ENCODE measurements at regions of chr12 and their contacts with region 1.

Region 1: GRCh38 chr12:50111693-50112455 is at the start of gene COX14:
- DNase-seq: peak; percentile 99
- ATAC-seq: peak; percentile 93
- H3K4me3 ChIP-seq: peak within 1 kb of the TSS; percentile 73
- H3K27ac ChIP-seq: peak within 1 kb of the TSS; percentile 94
- H3K4me1 ChIP-seq: peaks cover 2% of the 10 kb centered on the region
- H3K27me3 ChIP-seq: no peaks in the 10 kb centered on the region
- total RNA-seq, gene COX14: 141 to 203 (median 167) TPM

Region 2: GRCh38 chr12:50167041-50167828 is 55.4 kb after region 1 on chr12 and contains the start of gene CERS5:
- intact Hi-C with region 1: loop called in 1 of 4 experiments (anchors 10 kb)
- DNase-seq: peak; percentile 99 to 100 (median 100)
- ATAC-seq: peak; percentile 99 to 100
- H3K4me3 ChIP-seq: peak within 1 kb of the TSS; percentile 94
- H3K27ac ChIP-seq: peak within 1 kb of the TSS; percentile 93
- H3K4me1 ChIP-seq: no peaks in the 10 kb centered on the region
- H3K27me3 ChIP-seq: no peaks in the 10 kb centered on the region
- total RNA-seq, gene CERS5: 14.0 to 18.8 (median 17.7) TPM

Region 3: GRCh38 chr12:50425589-50426258 is 313.9 kb after region 1 on chr12:
- intact Hi-C with region 1: no loop called
- DNase-seq: no peak
- ATAC-seq: peak in 1 of 2 donors; percentile 67
- H3K4me3 ChIP-seq: no peak overlapping the region
- H3K27ac ChIP-seq: peak overlapping the region; percentile 23
- H3K4me1 ChIP-seq: peaks cover 6% of the 10 kb centered on the region
- H3K27me3 ChIP-seq: no peaks in the 10 kb centered on the region